H1 (cell line): ENCODE measurements at regions of chr3 and their contacts with region 1.

Region 1: GRCh38 chr3:136861890-136862616 is at the start of gene NCK1:
- DNase-seq: peak; percentile 91 to 94
- H3K4me3 ChIP-seq: peak within 1 kb of the TSS; percentile 61 to 88 (median 84)
- H3K27ac ChIP-seq: peak within 1 kb of the TSS; percentile 70
- H3K4me1 ChIP-seq: peaks cover 0 to 9% (median 1%) of the 10 kb centered on the region in 4 experiments; a peak in 3 of 7 replicates
- H3K27me3 ChIP-seq: no peaks in the 10 kb centered on the region
- CTCF ChIP-seq: peak in 1 of 3 experiments; percentile 10; a peak in 1 of 4 replicates
- EP300 ChIP-seq: no peak; a peak in 1 of 3 replicates
- POLR2A ChIP-seq: peak; percentile 55 to 90
- RAD21 ChIP-seq: 0 out of 4 replicates have a peak, but pooled peaks of 1 of the 2 experiments have one; percentile 10
- total RNA-seq, gene NCK1: 28.5 and 28.7 TPM in 2 replicates

Region 2: GRCh38 chr3:136838641-136839555 is 23.2 kb before region 1 on chr3:
- CTCF ChIA-PET with region 1: interaction called, 3 read pairs
- POLR2A ChIA-PET with region 1: interaction called, 14 read pairs
- DNase-seq: no peak
- H3K4me3 ChIP-seq: no peak overlapping the region
- H3K27ac ChIP-seq: no peak overlapping the region
- H3K4me1 ChIP-seq: 0 out of 7 replicates have a peak, but pooled peaks cover 0 to 3% (median 0%) of the 10 kb centered on the region in 4 experiments
- H3K27me3 ChIP-seq: no peaks in the 10 kb centered on the region; a peak in 1 of 7 replicates
- CTCF ChIP-seq: no peak
- EP300 ChIP-seq: no peak
- POLR2A ChIP-seq: no peak
- RAD21 ChIP-seq: no peak